Activated CD8-positive, alpha-beta T cell treated with anti-CD3 and anti-CD28 coated beads, Interleukin-2, amount 10 ng/mL, durations not matched to agents 7 days and 5 days (primary cell): ENCODE measurements at regions of chr11 and their contacts with region 1.

Region 1: GRCh38 chr11:117985953-117986887 is at the start of gene IL10RA:
- DNase-seq: peak; percentile 88
- ATAC-seq: peak; percentile 89
- H3K4me3 Mint-ChIP-seq: peak within 1 kb of the TSS; percentile 96
- H3K27ac Mint-ChIP-seq: peak within 1 kb of the TSS; percentile 97
- H3K4me1 Mint-ChIP-seq: peaks cover 70% of the 10 kb centered on the region
- H3K27me3 Mint-ChIP-seq: no peaks in the 10 kb centered on the region
- total RNA-seq, gene IL10RA: 202 to 210 TPM

Region 2: GRCh38 chr11:117678658-117679406 is 307.4 kb before region 1 on chr11:
- CTCF ChIA-PET with region 1: no interaction called
- POLR2A ChIA-PET with region 1: no interaction called
- DNase-seq: no peak
- ATAC-seq: no peak
- H3K4me3 Mint-ChIP-seq: no peak overlapping the region
- H3K27ac Mint-ChIP-seq: no peak overlapping the region
- H3K4me1 Mint-ChIP-seq: peaks cover 2% of the 10 kb centered on the region
- H3K27me3 Mint-ChIP-seq: peaks cover 2% of the 10 kb centered on the region

Region 3: GRCh38 chr11:117970400-117971024 is 15.7 kb before region 1 on chr11:
- CTCF ChIA-PET with region 1: interaction called, 3 read pairs
- POLR2A ChIA-PET with region 1: interaction called, 27 read pairs
- DNase-seq: peak; percentile 56
- ATAC-seq: peak; percentile 59
- H3K4me3 Mint-ChIP-seq: no peak overlapping the region
- H3K27ac Mint-ChIP-seq: peak overlapping the region; percentile 47
- H3K4me1 Mint-ChIP-seq: peaks cover 66% of the 10 kb centered on the region
- H3K27me3 Mint-ChIP-seq: no peaks in the 10 kb centered on the region

Region 4: DNA sequence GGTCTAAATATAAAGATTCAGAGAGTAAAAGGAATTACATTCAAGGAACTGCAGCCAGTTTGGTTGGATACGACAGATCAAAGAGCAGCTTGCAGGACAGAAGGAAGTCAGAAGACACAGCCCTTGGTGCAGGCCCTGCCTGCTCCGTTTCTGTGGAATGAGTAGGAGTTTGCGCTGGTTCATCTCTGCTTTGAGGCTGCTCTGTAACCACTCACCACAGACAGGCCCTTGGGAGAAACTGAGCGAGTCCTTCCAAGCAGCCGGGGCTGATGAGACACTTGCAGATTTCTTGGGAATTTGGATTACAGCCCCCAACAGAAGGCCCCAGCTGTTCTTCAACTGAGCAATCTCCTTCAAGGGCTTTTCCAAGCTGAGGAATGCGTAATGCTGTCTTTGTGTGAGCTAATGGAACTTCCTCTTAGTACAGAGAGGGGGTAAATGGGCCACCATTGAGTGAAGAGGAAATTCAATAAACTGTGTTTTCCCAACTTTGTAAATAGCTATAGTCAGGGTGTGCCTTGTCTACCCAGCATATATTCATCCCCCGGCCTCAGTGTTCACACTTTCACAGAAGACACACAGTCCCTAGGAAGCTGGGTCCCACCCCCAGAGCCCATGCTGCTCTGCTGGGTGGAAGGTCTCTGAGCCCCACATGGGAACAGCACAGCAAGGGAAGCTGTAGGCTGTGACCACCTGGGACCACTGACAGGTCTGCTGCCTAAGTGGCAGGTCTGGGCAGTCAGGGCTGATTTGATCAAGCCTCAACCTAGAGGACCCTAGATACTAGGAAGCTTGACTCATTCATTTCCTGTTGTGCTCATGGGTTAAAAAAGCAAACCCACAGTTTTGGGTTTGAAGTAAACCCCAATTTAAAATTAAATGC is 16.6 kb after region 1 on chr11:
- CTCF ChIA-PET with region 1: interaction called, 98 read pairs
- POLR2A ChIA-PET with region 1: interaction called, 225 read pairs
- DNase-seq: peak; percentile 70
- ATAC-seq: peak; percentile 52
- H3K4me3 Mint-ChIP-seq: peak overlapping the region; percentile 72
- H3K27ac Mint-ChIP-seq: peak overlapping the region; percentile 98
- H3K4me1 Mint-ChIP-seq: peaks cover 100% of the 10 kb centered on the region
- H3K27me3 Mint-ChIP-seq: no peaks in the 10 kb centered on the region

Region 5: DNA sequence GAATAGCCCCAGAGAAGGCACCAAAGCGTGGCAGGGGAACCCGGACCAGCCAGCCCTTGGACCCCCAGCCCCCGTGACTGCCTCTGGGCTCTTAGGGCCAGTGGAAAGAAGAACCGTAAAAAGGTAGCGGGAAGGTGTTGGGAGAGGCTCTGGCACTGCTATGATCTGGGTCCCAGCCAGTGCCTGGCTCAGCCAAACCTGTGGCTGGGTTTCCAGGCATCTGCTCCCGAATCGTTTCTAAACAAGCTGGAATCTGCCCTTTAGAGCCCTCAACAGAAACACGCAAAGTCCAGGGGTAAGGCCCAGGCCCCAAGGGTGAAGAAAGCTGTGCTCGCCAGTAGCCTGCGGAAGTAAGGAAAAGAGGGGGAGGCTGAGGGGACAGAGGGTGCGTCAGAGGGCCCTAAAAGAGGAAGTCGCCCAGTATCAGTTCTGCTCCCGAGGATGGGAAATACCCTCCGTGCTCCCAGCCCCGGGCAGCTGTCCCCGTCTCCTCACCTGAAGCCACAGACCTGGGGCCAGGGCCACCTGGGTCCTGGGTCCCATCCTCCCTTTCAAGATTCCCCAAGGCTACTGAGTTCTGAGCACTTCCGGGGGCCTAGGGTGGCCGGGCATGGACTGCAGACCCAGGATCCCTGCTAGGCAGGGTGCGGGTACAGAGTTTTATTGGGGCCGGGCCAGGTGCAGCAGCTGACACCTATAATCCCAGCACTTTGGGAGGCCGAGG is 24.7 kb after region 1 on chr11:
- CTCF ChIA-PET with region 1: interaction called, 6 read pairs
- POLR2A ChIA-PET with region 1: interaction called, 31 read pairs
- DNase-seq: no peak
- ATAC-seq: no peak
- H3K4me3 Mint-ChIP-seq: no peak overlapping the region
- H3K27ac Mint-ChIP-seq: peak overlapping the region; percentile 90
- H3K4me1 Mint-ChIP-seq: peaks cover 100% of the 10 kb centered on the region
- H3K27me3 Mint-ChIP-seq: no peaks in the 10 kb centered on the region

Region 6: GRCh38 chr11:118046051-118046963 is 60.1 kb after region 1 on chr11:
- CTCF ChIA-PET with region 1: interaction called, 84 read pairs
- POLR2A ChIA-PET with region 1: interaction called, 62 read pairs
- DNase-seq: peak; percentile 50
- ATAC-seq: peak; percentile 76
- H3K4me3 Mint-ChIP-seq: peak overlapping the region; percentile 9
- H3K27ac Mint-ChIP-seq: peak overlapping the region; percentile 77
- H3K4me1 Mint-ChIP-seq: peaks cover 91% of the 10 kb centered on the region
- H3K27me3 Mint-ChIP-seq: no peaks in the 10 kb centered on the region